PC-3 (cell line): ENCODE measurements at regions of chr2 and their contacts with region 1.

Region 1: DNA sequence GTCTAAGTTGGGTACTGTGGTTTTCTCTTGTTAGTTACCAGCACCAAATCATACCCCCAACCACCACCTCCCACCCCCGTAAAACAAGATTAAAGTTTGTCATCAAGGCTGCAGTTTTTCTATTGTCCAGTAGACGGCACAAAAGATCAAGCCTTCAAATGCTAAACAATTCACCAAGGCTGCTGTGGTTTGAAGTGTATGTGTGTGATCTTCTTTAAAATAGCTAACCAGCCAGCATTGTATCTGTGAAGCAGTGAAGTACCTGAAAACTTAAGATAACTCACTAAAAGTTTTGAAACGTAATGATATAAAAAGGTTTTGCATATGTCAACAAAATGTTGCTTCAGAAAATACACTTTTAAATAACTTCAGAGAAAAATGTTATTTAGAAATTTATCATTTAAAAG is 5.9 kb upstream of the MEIS1 start:
- DNase-seq: peak; percentile 77
- ATAC-seq: no peak
- H3K4me3 ChIP-seq: no peak overlapping the region
- H3K27ac ChIP-seq: no peak overlapping the region
- H3K4me1 ChIP-seq: peaks cover 3% of the 10 kb centered on the region; the same call in 1 of the 2 replicates
- H3K27me3 ChIP-seq: peaks cover 23% of the 10 kb centered on the region
- CTCF ChIP-seq: peak; percentile 91

Region 2: DNA sequence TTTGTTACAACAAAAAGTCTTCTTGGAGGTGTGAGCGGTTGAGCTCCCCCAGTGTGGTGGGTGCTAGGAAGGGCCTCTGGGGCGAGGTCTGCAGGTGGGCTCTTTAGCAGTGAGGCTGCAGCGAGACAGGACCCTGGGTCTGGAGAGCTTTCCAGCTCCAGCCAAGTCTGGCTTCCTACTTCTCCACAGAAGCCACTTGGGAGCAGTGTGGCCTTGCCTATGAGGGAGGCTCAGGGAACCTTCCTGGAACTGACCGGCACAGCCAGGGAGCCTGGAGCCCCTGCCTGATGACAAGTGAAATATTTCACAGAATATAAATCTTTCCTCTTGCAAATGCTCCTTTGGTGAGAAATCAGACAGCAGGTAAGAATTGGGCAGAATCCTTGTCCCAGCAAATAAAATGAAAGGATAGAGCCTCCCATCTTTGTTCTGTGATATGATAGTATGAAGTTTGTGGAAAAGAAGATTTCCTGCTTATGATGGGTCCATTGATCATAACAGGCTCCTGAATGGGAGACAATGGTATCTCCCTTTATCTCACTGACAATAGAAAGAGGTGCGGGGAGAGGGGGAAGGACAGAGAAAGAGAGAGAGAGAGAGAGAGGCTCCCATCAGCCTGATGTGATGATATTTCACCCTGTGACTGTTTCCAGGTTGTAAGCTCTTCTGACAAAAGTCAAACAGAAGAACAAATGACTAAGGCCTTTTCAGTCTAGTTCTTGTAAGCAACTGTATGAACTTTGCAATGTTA is 706.9 kb before region 1 on chr2:
- CTCF ChIA-PET with region 1: no interaction called
- POLR2A ChIA-PET with region 1: no interaction called
- intact Hi-C with region 1: loop called (anchors 5 kb)
- DNase-seq: peak; percentile 55
- ATAC-seq: peak; percentile 83
- H3K4me3 ChIP-seq: no peak overlapping the region
- H3K27ac ChIP-seq: no peak overlapping the region
- H3K4me1 ChIP-seq: peaks cover 20% of the 10 kb centered on the region
- H3K27me3 ChIP-seq: peaks cover 29% of the 10 kb centered on the region
- CTCF ChIP-seq: peak; percentile 60

Region 3: DNA sequence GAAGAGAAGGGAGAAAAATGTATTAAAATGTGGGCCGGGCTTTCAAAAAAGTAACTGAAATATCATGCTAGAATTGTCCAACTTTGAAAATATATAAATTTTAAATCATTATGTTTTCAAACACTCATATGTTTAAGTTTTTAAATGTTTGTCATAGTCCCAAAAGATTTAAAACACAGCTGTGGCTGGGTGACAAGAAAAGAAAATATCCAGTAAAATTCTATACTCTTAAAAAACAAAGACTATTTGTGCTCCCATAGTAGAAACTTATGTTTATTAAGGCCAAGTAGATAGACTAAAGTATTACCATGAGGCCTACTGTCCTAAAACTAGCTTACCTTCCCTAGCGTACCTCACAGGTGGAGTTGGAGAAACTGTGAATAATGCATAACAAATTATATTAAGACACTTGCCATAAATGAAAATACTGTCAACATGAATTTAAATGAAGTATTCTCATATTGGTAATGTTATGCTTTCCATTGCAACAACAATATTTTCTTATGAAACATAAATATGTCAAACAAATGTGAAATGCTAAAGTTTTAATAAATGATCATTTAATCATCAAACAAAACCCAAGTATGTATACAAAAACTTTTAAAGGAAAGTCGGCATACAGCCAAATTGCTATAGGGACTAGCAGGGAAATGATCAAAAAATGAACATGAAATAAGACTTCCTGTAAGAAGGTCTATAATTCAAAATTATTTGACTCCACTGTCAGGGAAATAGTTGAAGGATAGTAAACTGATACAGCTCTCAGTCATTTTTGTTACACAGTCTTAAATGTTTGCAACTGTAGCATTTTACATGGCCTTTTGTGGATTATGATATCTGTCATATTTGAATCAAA is 19.3 kb after region 1 on chr2:
- CTCF ChIA-PET with region 1: interaction called, 12 read pairs
- POLR2A ChIA-PET with region 1: no interaction called
- intact Hi-C with region 1: no loop called
- DNase-seq: no peak
- ATAC-seq: no peak
- H3K4me3 ChIP-seq: no peak overlapping the region
- H3K27ac ChIP-seq: no peak overlapping the region
- H3K4me1 ChIP-seq: no peaks in the 10 kb centered on the region
- H3K27me3 ChIP-seq: no peaks in the 10 kb centered on the region
- CTCF ChIP-seq: no peak

Region 4: DNA sequence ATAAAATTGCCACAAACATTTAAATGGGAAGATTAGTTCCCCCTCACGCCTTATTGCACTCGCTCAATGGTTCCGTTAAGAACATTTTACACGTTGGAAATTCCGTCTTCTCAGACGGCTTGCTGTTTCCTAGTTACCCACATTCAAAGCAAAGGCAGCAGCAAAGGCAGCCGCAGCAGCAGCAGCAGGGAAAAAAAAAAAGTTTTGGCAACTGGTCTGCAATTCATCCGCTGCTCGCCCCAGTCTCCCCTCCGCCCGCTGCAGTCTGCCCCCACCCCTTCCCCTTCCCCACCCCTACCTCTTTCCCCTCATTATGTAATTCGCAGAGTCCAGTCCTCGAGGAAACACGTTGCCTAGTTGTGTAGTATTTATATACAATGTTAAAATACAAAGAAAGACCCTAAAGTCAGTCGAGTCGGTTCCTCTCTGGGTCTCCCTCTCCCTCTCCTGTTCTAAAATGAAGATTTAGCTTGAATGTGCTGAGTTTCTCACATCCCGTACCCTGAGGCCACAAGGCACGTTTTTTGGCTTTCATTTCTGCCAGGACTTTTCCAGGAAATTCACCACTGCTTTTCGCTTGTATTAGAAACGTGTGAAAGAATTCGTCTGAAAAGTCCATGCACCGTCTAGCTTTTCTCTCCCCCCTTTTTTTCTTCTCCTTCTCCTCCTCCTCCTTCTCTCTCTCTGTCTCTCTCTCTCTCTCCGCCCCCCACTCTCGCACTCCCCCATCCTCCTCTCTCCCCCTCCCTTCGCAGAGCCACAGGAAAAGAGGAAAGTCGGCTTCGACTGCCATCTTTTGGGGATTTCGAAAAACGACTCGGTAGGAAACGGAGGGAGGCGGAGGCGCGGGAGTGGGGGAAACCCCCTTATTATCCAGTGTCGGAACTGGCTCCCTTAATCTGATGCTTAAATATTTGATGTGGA is 145.9 kb after region 1 on chr2:
- CTCF ChIA-PET with region 1: interaction called, 4 read pairs
- POLR2A ChIA-PET with region 1: no interaction called
- intact Hi-C with region 1: loop called (anchors 1 kb)
- DNase-seq: peak; percentile 77
- ATAC-seq: peak; percentile 65
- H3K4me3 ChIP-seq: peak overlapping the region; percentile 76
- H3K27ac ChIP-seq: no peak overlapping the region
- H3K4me1 ChIP-seq: peaks cover 17% of the 10 kb centered on the region
- H3K27me3 ChIP-seq: peaks cover 37% of the 10 kb centered on the region
- CTCF ChIP-seq: peak; percentile 84

Region 5: DNA sequence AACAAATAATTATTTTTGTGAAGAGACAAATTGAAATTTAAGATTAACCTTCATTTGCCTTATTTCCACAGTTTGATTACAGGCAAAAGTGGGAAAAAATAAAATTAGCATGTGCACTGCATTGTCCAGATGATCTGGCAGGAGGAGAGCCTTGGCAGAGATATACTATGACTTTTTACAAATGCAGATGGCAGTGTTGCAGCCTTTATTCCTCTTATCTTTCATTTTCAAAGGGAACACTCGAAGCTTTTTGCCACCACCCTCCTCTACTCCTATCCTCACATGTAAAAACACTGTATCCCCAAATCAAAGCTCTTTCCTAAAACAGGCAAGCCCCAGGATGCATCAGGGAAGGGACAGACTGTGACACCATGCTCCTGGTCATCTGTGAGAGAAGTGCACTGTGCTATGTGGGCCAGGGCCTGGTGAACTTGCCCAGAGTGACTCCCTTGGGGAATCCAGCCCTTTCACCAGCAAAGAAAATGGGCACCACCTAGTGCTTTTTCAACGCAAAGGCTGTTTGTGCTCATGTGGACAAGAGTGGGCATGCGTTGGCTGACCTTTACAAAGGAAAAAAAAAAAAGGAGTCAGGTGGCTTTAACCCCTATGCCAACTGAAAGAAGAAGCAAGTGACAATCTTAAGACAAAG is 893.4 kb after region 1 on chr2:
- CTCF ChIA-PET with region 1: interaction called, 5 read pairs
- POLR2A ChIA-PET with region 1: no interaction called
- intact Hi-C with region 1: loop called (anchors 5 kb)
- DNase-seq: peak; percentile 79
- ATAC-seq: peak; percentile 93
- H3K4me3 ChIP-seq: no peak overlapping the region
- H3K27ac ChIP-seq: peak overlapping the region; percentile 44
- H3K4me1 ChIP-seq: no peaks in the 10 kb centered on the region; the same call in 1 of the 2 replicates
- H3K27me3 ChIP-seq: no peaks in the 10 kb centered on the region
- CTCF ChIP-seq: peak; percentile 88

Region 6: GRCh38 chr2:67650291-67651133 is 1221.4 kb after region 1 on chr2:
- CTCF ChIA-PET with region 1: no interaction called
- POLR2A ChIA-PET with region 1: no interaction called
- intact Hi-C with region 1: loop called (anchors 1 kb)
- DNase-seq: peak; percentile 85
- ATAC-seq: peak; percentile 100
- H3K4me3 ChIP-seq: no peak overlapping the region
- H3K27ac ChIP-seq: 0 out of 2 replicates have a peak overlapping the region, but pooled peaks have one; percentile 19
- H3K4me1 ChIP-seq: peaks cover 6% of the 10 kb centered on the region
- H3K27me3 ChIP-seq: no peaks in the 10 kb centered on the region
- CTCF ChIP-seq: peak; percentile 90